HEK293 (cell line): ENCODE measurements at regions of chr5 and their contacts with region 1.

Region 1: DNA sequence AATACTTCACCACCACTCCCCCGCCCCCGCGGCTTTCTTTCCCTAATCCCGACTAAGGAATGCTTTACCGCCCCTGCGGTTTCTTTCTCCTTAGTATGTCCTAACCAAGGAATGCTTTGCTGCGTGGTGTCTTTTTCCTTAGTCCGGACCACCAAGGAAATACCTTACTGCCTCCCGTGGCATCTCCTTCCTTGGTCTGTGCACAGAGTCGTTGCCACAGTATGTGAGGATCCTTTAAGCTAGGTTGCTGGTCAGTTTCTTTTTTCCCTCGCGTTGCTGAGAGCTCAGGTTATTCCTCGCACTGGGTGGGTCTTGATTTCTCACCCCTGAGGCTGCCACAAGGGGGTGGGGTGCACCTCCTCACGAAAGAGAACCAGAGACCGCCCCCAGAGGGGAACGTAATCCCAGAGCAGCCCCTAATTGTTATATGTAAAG is 309.4 kb downstream of the NR3C1 start:
- H3K4me3 ChIP-seq: no peak overlapping the region
- H3K27ac ChIP-seq: no peak overlapping the region
- H3K4me1 ChIP-seq: no peaks in the 10 kb centered on the region
- CTCF ChIP-seq: no peak

Region 2: DNA sequence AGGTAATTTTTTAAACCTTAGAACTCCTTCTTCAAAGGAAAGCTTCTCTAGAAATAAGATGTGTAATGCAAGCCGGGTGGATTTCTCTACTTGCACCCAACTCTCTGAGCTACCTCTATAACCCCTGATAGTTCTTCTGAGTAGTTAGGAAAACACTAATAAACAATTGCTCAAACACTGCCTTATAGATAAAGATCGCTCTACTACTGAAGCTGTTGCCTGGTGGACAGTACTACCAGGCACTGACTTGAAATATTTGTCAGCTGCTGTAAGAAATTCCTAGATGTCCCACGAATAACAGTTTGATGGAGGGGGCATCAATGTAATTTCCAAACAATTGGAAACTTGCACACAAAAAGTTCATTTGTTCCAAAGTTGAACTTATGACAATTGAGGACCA is 267.3 kb after region 1 on chr5:
- CTCF ChIA-PET with region 1: no interaction called
- POLR2A ChIA-PET with region 1: interaction called, 10 read pairs
- H3K4me3 ChIP-seq: no peak overlapping the region
- H3K27ac ChIP-seq: no peak overlapping the region
- H3K4me1 ChIP-seq: peaks cover 20% of the 10 kb centered on the region; the same call in 1 of the 2 replicates
- CTCF ChIP-seq: no peak

Region 3: GRCh38 chr5:143413958-143414669 is 320.0 kb after region 1 on chr5:
- CTCF ChIA-PET with region 1: no interaction called
- POLR2A ChIA-PET with region 1: no interaction called
- H3K4me3 ChIP-seq: no peak overlapping the region
- H3K27ac ChIP-seq: no peak overlapping the region
- H3K4me1 ChIP-seq: peaks cover 15% of the 10 kb centered on the region; the same call in 1 of the 2 replicates
- CTCF ChIP-seq: no peak